ENCODE measurements at regions of chr1 and their contacts with region 1.

Region 1: DNA sequence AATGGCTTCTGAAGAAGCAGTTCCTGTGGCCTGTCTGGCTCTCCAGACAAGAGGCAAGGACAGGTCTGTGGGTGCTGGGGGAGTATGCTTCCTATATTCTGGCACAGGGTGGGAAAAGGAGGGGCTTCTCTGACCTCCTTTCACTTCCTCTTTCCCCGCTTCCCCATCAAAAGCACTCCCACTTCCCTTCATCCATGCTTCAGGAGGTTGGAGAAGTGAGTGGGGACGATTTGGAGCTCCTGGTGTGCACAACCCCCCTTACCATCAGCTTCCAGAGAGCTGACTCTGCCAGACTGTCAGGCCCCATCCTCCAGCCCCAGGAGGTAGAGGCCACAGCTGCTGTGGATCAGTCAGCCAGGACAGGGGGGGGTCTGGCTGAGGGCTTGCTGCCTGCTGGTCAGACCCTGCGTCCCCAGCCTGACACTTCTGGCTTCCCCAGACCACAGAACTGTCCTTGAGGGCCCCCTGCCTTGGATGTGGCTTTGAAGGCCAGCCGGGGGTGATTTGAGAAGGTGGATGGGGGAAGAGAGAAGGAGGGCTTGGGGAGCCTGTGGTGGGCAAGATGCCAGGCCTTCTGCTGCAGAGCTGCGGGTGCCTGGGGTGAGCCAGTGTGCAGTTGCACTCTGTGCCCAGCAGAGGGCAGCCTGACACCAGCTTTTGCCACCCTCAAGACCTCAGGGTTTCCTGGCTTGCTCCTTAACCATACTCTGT is 21.5 kb upstream of the TMEM222 start:
- DNase-seq: peak; percentile 85
- H3K4me3 Mint-ChIP-seq: no peak overlapping the region
- H3K27ac Mint-ChIP-seq: peak overlapping the region; percentile 67
- H3K4me1 Mint-ChIP-seq: peaks cover 13% of the 10 kb centered on the region
- H3K27me3 Mint-ChIP-seq: no peaks in the 10 kb centered on the region
- CTCF ChIP-seq: peak; percentile 99

Region 2: GRCh38 chr1:27044613-27045151 is 255.8 kb before region 1 on chr1:
- CTCF ChIA-PET with region 1: interaction called, 11 read pairs
- POLR2A ChIA-PET with region 1: no interaction called
- intact Hi-C with region 1: loop called (anchors 5 kb)
- DNase-seq: peak; percentile 85
- H3K4me3 Mint-ChIP-seq: no peak overlapping the region
- H3K27ac Mint-ChIP-seq: no peak overlapping the region
- H3K4me1 Mint-ChIP-seq: peaks cover 9% of the 10 kb centered on the region
- H3K27me3 Mint-ChIP-seq: no peaks in the 10 kb centered on the region
- CTCF ChIP-seq: peak; percentile 98

Region 3: GRCh38 chr1:27192039-27192529 is 108.4 kb before region 1 on chr1:
- CTCF ChIA-PET with region 1: interaction called, 10 read pairs
- POLR2A ChIA-PET with region 1: no interaction called
- intact Hi-C with region 1: no loop called
- DNase-seq: peak; percentile 58
- H3K4me3 Mint-ChIP-seq: peak overlapping the region; percentile 5
- H3K27ac Mint-ChIP-seq: peak overlapping the region; percentile 43
- H3K4me1 Mint-ChIP-seq: peaks cover 15% of the 10 kb centered on the region
- H3K27me3 Mint-ChIP-seq: no peaks in the 10 kb centered on the region
- CTCF ChIP-seq: no peak

Region 4: GRCh38 chr1:27321813-27322577 is 21.5 kb after region 1 on chr1 and contains the start of gene TMEM222:
- CTCF ChIA-PET with region 1: interaction called, 57 read pairs
- POLR2A ChIA-PET with region 1: interaction called, 18 read pairs
- intact Hi-C with region 1: no loop called
- DNase-seq: peak; percentile 96
- H3K4me3 Mint-ChIP-seq: peak within 1 kb of the TSS; percentile 91
- H3K27ac Mint-ChIP-seq: peak within 1 kb of the TSS; percentile 94
- H3K4me1 Mint-ChIP-seq: peaks cover 5% of the 10 kb centered on the region
- H3K27me3 Mint-ChIP-seq: no peaks in the 10 kb centered on the region
- CTCF ChIP-seq: no peak
- total RNA-seq, gene TMEM222: 36.9 and 38.3 TPM in 2 replicates

Region 5: GRCh38 chr1:27357281-27358037 is 57.0 kb after region 1 on chr1:
- CTCF ChIA-PET with region 1: interaction called, 32 read pairs
- POLR2A ChIA-PET with region 1: interaction called, 9 read pairs
- intact Hi-C with region 1: no loop called
- DNase-seq: peak; percentile 50
- H3K4me3 Mint-ChIP-seq: no peak overlapping the region
- H3K27ac Mint-ChIP-seq: no peak overlapping the region
- H3K4me1 Mint-ChIP-seq: peaks cover 4% of the 10 kb centered on the region
- H3K27me3 Mint-ChIP-seq: no peaks in the 10 kb centered on the region
- CTCF ChIP-seq: peak; percentile 95

Region 6: DNA sequence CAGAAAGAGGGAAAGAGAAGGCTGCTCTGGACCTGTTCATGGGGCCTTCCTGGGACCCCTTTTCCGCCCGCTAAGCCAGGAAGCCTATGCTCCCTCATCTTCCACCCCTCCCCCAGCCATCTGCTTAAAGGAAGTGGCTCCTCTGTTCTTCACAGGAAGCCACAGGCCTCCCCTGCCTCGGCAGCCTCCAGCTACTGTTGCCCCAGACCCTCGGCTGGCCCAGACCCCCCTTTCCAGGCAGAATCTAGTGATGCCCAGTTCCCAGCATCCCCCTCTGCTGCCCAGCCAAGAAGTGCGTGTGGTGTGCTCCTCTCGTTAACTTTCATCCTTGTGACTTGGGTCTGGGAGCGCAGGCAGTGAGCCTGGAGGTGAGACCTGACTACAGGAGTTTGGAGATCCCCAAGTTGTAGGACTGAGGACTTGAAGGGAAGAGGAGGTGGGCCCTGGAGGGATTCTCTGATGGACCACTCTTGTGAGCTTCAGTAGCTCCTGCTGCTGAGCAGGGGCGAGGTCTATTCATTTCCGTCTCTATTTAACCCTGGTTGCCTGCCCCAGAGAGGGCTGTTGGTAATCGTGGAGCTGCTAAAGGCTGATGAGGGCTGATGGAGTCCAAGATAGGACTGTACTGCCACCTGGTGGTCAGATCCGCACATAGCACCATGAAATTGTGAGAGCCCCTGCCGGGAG is 362.4 kb after region 1 on chr1:
- CTCF ChIA-PET with region 1: interaction called, 6 read pairs
- POLR2A ChIA-PET with region 1: no interaction called
- intact Hi-C with region 1: loop called (anchors 5 kb)
- DNase-seq: peak; percentile 86
- H3K4me3 Mint-ChIP-seq: no peak overlapping the region
- H3K27ac Mint-ChIP-seq: peak overlapping the region; percentile 81
- H3K4me1 Mint-ChIP-seq: peaks cover 29% of the 10 kb centered on the region
- H3K27me3 Mint-ChIP-seq: no peaks in the 10 kb centered on the region
- CTCF ChIP-seq: peak; percentile 69

Region 7: DNA sequence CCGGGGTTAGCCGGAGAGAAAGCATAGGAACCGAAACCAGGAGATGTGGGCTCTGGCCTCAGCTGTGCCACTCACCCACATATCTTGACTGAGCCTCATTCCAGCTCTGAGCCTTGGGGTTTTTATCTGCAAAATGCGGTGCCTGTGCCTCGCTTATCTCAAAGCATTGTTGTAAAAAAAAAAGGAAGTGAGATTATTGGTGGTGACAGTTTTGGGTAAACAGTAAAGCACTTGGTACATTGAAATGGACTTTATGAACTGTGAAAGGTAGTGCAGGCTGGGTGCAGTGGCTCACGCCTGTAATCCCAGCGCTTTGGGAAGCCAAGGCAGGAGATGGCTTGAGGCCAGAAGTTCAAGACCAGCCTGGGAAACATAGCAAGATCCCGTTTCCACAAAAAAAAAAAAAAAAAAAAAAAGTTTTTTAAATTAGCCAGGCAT is 872.2 kb after region 1 on chr1:
- CTCF ChIA-PET with region 1: no interaction called
- POLR2A ChIA-PET with region 1: no interaction called
- intact Hi-C with region 1: no loop called
- DNase-seq: no peak
- H3K4me3 Mint-ChIP-seq: no peak overlapping the region
- H3K27ac Mint-ChIP-seq: no peak overlapping the region
- H3K4me1 Mint-ChIP-seq: peaks cover 6% of the 10 kb centered on the region
- H3K27me3 Mint-ChIP-seq: no peaks in the 10 kb centered on the region
- CTCF ChIP-seq: no peak